ENCODE measurements at regions of chr1 and their contacts with region 1.

Region 1: GRCh38 chr1:65002508-65003315 is 36.4 kb upstream of the JAK1 start:
- DNase-seq: peak; percentile 67 to 87 (median 72)
- H3K4me3 ChIP-seq: peak overlapping the region; percentile 33 to 49
- H3K4me3 Mint-ChIP-seq: peak overlapping the region; percentile 77 to 90 (median 89)
- H3K27ac ChIP-seq: peak overlapping the region; percentile 52
- H3K27ac Mint-ChIP-seq: peak overlapping the region; percentile 57 to 96 (median 89)
- H3K4me1 ChIP-seq: peaks cover 25% of the 10 kb centered on the region
- H3K4me1 Mint-ChIP-seq: peaks cover 21 to 43% (median 30%) of the 10 kb centered on the region in 4 donors
- H3K27me3 ChIP-seq: no peaks in the 10 kb centered on the region
- H3K27me3 Mint-ChIP-seq: no peaks in the 10 kb centered on the region

Region 2: DNA sequence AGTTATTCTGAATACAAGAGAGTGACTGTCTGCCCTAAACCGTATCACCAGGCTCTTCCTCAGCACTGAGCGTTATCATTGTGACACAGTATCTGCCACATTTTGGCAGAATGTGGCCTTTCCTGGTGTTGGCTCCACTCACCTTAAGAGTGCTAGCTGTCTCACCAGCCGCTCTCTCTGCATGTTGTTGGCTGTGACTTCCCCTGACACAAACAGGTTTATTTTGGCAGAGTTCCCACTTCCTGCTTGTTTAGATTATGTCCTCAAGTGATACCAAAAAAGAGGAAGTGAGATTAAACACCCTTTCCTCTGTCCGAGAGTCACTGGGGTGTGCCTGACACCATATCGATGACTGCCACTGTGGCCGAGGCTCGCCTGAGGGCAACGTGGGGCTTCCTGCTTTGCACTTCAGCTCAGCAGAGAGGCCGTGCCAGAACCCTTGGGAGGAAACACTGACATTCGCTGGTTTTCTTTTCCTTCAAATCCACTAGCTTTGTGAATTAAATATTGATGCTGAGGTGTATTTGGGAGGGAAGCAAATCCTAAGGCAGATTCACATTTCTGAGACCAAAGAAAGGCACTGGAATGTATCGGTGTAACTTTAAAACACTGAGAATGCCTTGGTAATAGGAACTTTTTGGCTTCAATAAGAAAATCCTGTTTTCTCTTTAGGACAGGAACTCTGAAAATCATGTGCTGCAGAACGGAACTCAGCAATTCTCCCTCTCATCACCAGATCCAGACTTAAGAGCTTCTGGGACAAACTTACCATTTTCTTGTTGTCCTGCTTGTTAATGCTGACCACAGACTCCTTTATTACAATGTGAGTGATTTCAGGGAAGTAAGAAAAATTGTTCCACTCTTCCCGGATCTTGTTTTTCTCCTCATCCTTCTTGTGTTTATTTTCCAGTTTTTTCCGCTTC is 138.4 kb before region 1 on chr1:
- CTCF ChIA-PET with region 1: interaction called, 4 read pairs
- POLR2A ChIA-PET with region 1: no interaction called
- intact Hi-C with region 1: loop called (anchors 5 kb)
- DNase-seq: peak; percentile 71 to 77 (median 73)
- H3K4me3 ChIP-seq: no peak overlapping the region
- H3K4me3 Mint-ChIP-seq: peak overlapping the region in 7 of 8 donors; percentile 7 to 79 (median 64)
- H3K27ac ChIP-seq: peak overlapping the region; percentile 48
- H3K27ac Mint-ChIP-seq: peak overlapping the region; percentile 63 to 93 (median 89)
- H3K4me1 ChIP-seq: peaks cover 29% of the 10 kb centered on the region
- H3K4me1 Mint-ChIP-seq: peaks cover 30 to 58% (median 46%) of the 10 kb centered on the region in 4 donors
- H3K27me3 ChIP-seq: no peaks in the 10 kb centered on the region
- H3K27me3 Mint-ChIP-seq: no peaks in the 10 kb centered on the region

Region 3: GRCh38 chr1:64956733-64957441 is 45.8 kb before region 1 on chr1:
- CTCF ChIA-PET with region 1: interaction called, 3 read pairs
- POLR2A ChIA-PET with region 1: interaction called, 13 read pairs
- intact Hi-C with region 1: no loop called
- DNase-seq: peak in 3 of 5 donors; percentile 22 to 48 (median 29)
- H3K4me3 ChIP-seq: no peak overlapping the region
- H3K4me3 Mint-ChIP-seq: no peak overlapping the region
- H3K27ac ChIP-seq: peak overlapping the region; percentile 17
- H3K27ac Mint-ChIP-seq: no peak overlapping the region
- H3K4me1 ChIP-seq: peaks cover 99% of the 10 kb centered on the region
- H3K4me1 Mint-ChIP-seq: peaks cover 15 to 51% (median 33%) of the 10 kb centered on the region in 4 donors
- H3K27me3 ChIP-seq: no peaks in the 10 kb centered on the region
- H3K27me3 Mint-ChIP-seq: no peaks in the 10 kb centered on the region

Measured in CD4-positive, alpha-beta memory T cell (primary cell).